ENCODE measurements at regions of chr2 and their contacts with region 1.

Region 1: DNA sequence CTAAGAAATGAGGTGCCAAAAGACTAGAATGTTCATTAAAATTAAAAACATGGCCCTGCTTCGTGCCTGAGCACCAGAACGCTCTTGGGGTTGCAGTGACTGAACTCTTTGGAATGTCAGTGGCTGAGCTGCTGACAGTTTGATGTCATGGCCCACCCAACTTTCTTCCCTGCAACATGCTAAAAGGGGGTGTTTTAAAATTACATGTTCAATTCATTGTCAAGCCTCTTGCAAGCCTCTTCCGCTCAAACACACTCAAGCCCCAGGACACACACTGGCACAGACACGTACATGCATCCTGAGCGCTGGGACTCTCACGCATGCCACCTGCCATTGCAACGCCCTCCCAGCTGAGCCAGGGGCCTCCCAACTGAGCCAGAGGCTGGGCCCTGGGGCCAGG is 12.6 kb downstream of the RUFY4 start:
- DNase-seq: peak; percentile 61

Region 2: GRCh38 chr2:217667512-217667911 is 414.2 kb before region 1 on chr2:
- intact Hi-C with region 1: no loop called
- DNase-seq: no peak

Region 3: GRCh38 chr2:218003981-218004419 is 77.7 kb before region 1 on chr2:
- intact Hi-C with region 1: no loop called
- DNase-seq: peak; percentile 94

Region 4: DNA sequence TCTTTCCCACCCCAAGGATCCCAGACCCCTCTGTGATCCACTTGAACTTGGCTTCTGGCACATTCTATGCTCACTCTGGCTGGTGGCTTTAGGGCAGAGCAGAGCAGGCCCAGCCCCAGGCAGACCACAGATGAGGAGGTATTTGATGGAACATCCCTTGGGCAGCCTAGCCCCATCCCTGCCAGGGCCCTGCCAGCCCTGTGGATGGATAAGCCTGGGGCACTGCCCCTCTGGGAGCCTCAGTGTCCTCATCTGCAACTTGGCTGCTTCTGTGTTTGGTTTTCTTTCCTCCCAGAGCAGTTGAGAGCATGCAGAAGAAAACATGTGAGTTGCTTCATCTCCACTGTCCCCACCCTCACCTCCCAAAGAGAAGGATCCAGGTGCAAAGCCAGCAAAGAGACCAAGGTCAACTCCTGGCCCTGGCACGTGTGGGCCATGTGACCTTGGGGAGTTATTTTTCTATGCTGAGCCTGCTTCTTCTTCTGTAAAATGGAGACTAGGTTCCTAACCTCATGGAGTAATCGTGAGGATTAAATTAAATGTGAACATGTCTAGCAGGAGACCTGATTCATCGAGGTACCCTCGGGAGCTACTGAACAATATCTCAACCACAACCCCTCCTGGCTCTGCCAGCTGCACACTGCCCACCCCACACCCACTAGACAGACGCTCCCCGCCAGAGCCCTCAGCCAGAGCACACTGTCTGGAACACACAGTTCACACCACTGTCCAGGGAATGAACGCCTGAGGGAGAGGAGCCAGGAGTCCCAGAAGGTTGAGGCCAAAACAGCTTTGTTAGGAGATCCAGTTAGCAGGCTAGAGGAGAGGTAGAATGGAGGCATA is 64.3 kb before region 1 on chr2:
- intact Hi-C with region 1: loop called in 1 of 2 experiments (anchors 2 kb)
- DNase-seq: peak; percentile 92

Region 5: DNA sequence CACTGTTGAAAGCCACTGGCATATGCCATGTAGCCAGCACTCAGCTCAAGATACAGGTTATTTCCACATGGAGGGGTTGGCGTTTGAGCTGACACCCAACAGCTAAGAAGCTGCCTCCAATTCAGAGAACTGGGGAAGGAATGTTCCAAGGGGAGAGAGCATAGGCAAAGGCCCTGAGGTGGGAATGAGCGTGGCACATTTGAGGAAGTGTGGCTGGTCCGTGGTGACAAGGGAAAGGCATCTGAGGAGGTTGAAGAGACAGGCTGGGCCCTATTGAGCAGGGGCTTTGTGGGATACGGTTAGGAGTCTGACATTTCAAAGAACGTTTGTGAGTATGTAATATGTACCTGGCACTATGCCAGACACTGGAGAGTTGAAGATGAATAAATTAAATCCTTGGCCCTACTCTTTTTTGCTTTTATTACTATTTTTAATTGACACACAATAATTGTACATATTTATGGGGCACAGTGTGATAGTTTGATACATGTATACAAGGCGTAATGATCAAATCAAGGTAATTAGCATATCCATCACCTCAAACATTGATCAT is 238.2 kb after region 1 on chr2:
- intact Hi-C with region 1: no loop called
- DNase-seq: no peak

Measured in posterior vena cava (tissue), 2 donors.